Ovary (tissue), 10 donors: ENCODE measurements at regions of chr9 and their contacts with region 1.

Region 1: DNA sequence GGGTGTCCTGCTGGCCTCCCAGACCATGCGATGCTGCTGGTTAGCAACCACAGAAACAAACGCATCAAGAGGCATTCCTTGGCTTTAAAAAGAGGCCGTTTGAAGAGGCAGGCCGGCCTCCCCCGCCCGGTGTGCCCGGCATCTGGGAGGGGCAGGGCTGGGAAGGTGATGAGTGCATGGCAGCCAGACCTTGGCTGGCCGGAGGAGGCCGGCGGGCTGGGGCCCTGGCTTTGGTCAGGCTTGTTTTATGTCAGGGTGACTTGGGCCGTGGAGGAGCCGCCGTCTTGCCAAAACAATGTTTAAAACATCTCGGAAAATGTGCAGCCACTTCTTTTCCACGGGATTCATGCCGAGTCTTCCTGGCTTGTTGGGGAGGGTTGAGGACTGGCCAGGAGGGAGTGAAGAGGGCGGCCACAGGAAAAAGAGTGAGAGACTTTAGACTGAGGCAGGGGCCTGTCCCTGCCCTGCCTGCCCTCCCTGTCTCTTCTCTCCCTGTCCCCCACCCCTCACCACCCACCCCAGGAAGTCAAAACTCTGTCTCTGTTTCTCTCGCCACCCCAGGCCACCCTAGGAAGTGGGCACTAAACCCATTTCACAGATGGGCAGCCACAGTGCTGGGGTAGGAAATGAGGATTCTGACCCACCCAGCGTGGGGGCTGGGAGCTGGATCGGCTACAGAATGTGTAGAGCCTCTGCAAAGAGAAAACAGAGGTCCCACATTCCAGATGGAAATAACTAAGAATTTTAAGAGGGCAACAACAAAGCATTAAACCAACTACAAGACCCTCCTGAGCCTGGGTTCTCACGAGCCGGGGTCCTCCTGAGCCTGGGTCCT is 143.0 kb downstream of the RXRA start:
- DNase-seq: peak; percentile 70 to 84 (median 73)
- H3K4me3 ChIP-seq: no peak overlapping the region
- H3K27ac ChIP-seq: peak overlapping the region in 1 of 2 donors; percentile 69
- H3K4me1 ChIP-seq: peaks cover 12% of the 10 kb centered on the region
- H3K27me3 ChIP-seq: no peaks in the 10 kb centered on the region
- CTCF ChIP-seq: no peak
- EP300 ChIP-seq: no peak
- POLR2A ChIP-seq: no peak

Region 2: GRCh38 chr9:134325817-134326723 is 143.2 kb before region 1 on chr9 and contains the start of gene RXRA:
- intact Hi-C with region 1: no loop called
- DNase-seq: peak; percentile 88 to 92 (median 90)
- H3K4me3 ChIP-seq: peak within 1 kb of the TSS; percentile 65
- H3K27ac ChIP-seq: peak within 1 kb of the TSS; percentile 80 to 98
- H3K4me1 ChIP-seq: peaks cover 23% of the 10 kb centered on the region
- H3K27me3 ChIP-seq: no peaks in the 10 kb centered on the region
- CTCF ChIP-seq: peak in 1 of 3 donors; percentile 24
- EP300 ChIP-seq: no peak
- POLR2A ChIP-seq: peak; percentile 80
- total RNA-seq, gene RXRA: 23.0 to 82.2 (median 71.8) TPM

Region 3: DNA sequence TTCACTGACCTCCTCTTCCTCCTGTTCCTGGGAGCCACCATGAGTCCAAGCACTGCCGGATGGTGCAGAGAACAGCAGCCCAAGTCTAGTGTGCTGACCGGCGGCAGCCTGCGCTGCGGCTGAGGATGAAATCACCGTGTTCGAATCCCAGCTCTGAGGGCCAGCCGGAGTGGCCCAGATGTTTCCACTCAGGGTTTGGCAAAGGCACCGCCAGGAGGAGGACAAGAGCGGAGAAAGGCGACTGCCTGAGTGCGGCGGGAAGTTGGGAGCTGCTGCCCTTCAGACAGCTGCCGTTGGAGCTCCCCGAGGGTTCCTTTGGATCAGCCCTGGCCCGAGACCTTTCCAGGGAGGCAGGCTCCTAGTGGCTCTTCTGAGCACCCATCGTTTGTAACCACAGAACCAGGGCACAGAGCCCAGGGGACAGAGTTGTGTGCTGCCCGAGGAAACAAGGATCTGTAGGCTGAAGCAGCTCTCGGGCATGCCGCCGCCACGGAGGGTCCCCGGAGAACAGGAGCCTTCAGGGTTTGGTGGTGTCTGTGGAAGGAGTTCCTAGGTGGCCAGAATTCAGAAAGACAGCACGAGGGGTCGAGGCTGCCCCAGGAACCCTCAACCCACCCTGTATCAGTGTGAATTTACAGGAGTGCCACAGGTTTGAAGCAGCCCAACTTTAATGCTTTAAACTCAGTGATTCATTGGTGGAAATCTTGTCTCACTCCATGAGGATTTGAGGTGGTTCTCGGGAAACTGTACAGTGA is 56.8 kb after region 1 on chr9:
- intact Hi-C with region 1: loop called in 1 of 4 experiments (anchors 10 kb)
- DNase-seq: peak in 2 of 5 donors; percentile 33 to 53
- H3K4me3 ChIP-seq: no peak overlapping the region
- H3K27ac ChIP-seq: no peak overlapping the region
- H3K4me1 ChIP-seq: no peaks in the 10 kb centered on the region
- H3K27me3 ChIP-seq: no peaks in the 10 kb centered on the region
- CTCF ChIP-seq: no peak
- EP300 ChIP-seq: no peak
- POLR2A ChIP-seq: no peak

Region 4: DNA sequence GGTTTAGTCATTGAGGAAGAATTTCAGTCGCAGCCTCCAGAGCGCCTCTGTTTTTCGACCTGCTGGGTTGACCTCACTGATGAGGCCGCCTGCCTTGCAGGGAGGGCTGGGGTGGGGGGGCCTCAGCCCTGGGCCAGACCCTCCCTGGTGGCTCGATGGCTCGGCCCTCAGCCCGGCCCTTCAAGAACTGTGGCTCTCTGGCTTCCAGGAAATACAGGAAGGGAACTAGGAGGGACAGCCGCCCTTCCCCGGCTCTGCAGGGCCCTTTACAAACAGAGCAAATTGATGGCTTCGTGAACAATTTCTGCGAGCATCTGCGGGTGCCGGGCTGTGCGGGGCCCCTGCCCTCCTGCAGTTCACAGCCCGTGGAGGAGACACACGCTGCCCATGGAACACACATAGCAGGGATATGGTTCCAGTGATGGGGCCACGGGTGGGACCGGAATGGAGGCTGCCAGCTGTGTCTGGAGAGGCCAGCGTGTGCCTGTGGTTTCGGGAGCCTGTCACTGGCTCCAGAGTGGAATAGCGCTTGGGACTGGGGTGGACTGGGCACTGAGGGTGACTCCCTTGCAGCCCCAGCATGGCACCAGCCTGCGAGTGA is 211.9 kb after region 1 on chr9:
- intact Hi-C with region 1: no loop called
- DNase-seq: peak in 1 of 5 donors; percentile 50
- H3K4me3 ChIP-seq: no peak overlapping the region
- H3K27ac ChIP-seq: peak overlapping the region in 1 of 2 donors; percentile 27
- H3K4me1 ChIP-seq: peaks cover 22% of the 10 kb centered on the region
- H3K27me3 ChIP-seq: no peaks in the 10 kb centered on the region
- CTCF ChIP-seq: no peak
- EP300 ChIP-seq: no peak
- POLR2A ChIP-seq: no peak

Region 5: GRCh38 chr9:134783699-134784039 is 314.4 kb after region 1 on chr9:
- intact Hi-C with region 1: no loop called
- DNase-seq: peak in 4 of 5 donors; percentile 41 to 64 (median 55)
- H3K4me3 ChIP-seq: no peak overlapping the region
- H3K27ac ChIP-seq: no peak overlapping the region
- H3K4me1 ChIP-seq: no peaks in the 10 kb centered on the region
- H3K27me3 ChIP-seq: no peaks in the 10 kb centered on the region
- CTCF ChIP-seq: no peak
- EP300 ChIP-seq: no peak
- POLR2A ChIP-seq: no peak